ENCODE measurements at regions of chr18 and their contacts with region 1.

Region 1: DNA sequence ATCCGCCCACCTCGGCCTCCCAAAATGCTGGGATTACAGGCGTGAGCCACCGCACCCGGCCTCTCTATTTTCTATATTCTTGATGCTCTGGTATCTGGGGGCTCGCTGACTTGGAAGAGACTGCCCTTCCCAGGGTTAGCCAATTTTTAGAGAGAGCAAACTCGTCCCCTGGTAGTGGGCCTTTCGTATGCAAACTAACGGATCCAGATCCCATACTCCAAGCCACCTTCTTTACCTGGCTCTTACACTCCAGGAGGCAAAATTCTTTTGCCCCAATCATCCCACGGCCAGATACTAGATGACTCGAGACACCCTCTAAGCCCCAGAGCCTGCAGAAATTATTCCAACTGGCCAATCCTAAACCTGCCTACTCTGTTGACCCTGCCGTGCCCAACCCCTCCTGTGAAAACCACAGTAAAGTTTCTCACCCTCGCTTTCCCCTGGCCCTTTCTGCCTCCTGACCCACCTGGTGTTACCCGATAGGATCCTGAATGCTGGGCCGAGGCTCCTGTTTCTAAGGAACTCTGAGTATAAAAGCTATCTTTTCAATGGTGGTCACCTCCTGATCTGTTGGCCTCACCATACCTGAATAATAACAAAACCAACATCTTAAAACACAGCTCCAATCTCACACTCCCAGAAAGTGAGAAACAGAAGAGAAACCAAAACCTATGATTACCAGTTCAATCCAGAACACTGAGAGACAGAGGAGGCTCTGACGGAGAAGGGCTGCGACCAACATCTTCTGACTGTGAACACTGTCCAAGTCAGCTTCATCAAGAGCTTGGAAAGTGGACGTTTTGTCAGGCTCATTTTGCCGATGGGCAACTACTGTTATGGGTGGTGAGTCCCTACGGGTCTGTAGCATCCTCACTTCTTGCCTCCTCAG is 57.6 kb upstream of the ZNF532 start:
- DNase-seq: no peak
- H3K4me3 ChIP-seq: no peak overlapping the region
- H3K27me3 ChIP-seq: no peaks in the 10 kb centered on the region
- CTCF ChIP-seq: no peak

Region 2: GRCh38 chr18:58831606-58832005 is 24.5 kb after region 1 on chr18:
- CTCF ChIA-PET with region 1: no interaction called
- POLR2A ChIA-PET with region 1: no interaction called
- DNase-seq: no peak
- H3K4me3 ChIP-seq: no peak overlapping the region
- H3K27me3 ChIP-seq: no peaks in the 10 kb centered on the region
- CTCF ChIP-seq: no peak

Region 3: GRCh38 chr18:59109375-59109774 is 302.3 kb after region 1 on chr18:
- CTCF ChIA-PET with region 1: no interaction called
- POLR2A ChIA-PET with region 1: no interaction called
- DNase-seq: no peak
- H3K4me3 ChIP-seq: no peak overlapping the region
- H3K27me3 ChIP-seq: peaks cover 14% of the 10 kb centered on the region
- CTCF ChIP-seq: no peak

Region 4: GRCh38 chr18:59744271-59744721 is 937.2 kb after region 1 on chr18:
- CTCF ChIA-PET with region 1: no interaction called
- POLR2A ChIA-PET with region 1: interaction called, 15 read pairs
- DNase-seq: peak; percentile 97
- H3K4me3 ChIP-seq: no peak overlapping the region
- H3K27me3 ChIP-seq: no peaks in the 10 kb centered on the region
- CTCF ChIP-seq: no peak

Measured in BJ (cell line).